ENCODE measurements at regions of chr1 and their contacts with region 1.

Region 1: GRCh38 chr1:51009381-51009780 is 39.3 kb downstream of the CDKN2C start:
- DNase-seq: no peak
- ATAC-seq: no peak
- H3K4me3 ChIP-seq: no peak overlapping the region
- H3K4me3 Mint-ChIP-seq: no peak overlapping the region
- H3K27ac ChIP-seq: no peak overlapping the region
- H3K27ac Mint-ChIP-seq: no peak overlapping the region
- H3K4me1 ChIP-seq: no peaks in the 10 kb centered on the region
- H3K4me1 Mint-ChIP-seq: no peaks in the 10 kb centered on the region
- H3K27me3 ChIP-seq: no peaks in the 10 kb centered on the region
- H3K27me3 Mint-ChIP-seq: peaks cover 0 to 2% of the 10 kb centered on the region in 2 donors
- CTCF ChIP-seq: no peak

Region 2: DNA sequence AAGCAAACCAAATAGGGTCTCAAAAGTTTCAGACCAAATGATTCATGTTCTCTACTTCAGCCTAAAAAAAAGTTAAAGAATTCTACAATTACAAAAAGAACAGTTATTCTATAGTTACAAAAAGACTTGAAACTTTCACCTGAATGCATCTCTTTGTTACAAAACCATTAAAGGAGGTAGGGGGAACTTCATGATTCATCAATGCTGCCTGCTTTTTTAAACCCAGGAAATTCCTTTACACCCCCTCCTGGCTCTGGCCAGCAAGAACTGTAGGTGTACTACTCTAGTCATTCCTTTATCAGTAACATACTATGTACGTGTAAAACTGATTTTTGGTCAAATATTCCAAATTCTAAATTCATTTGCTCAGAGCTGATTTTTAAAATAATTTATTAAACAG is 54.3 kb before region 1 on chr1:
- intact Hi-C with region 1: loop called (anchors 2 kb)
- DNase-seq: no peak
- ATAC-seq: no peak
- H3K4me3 ChIP-seq: no peak overlapping the region
- H3K4me3 Mint-ChIP-seq: no peak overlapping the region
- H3K27ac ChIP-seq: no peak overlapping the region
- H3K27ac Mint-ChIP-seq: no peak overlapping the region
- H3K4me1 ChIP-seq: peaks cover 6% of the 10 kb centered on the region
- H3K4me1 Mint-ChIP-seq: peaks cover 19 to 21% of the 10 kb centered on the region in 2 donors
- H3K27me3 ChIP-seq: no peaks in the 10 kb centered on the region
- H3K27me3 Mint-ChIP-seq: no peaks in the 10 kb centered on the region
- CTCF ChIP-seq: no peak

Measured in natural killer cell (primary cell).